ENCODE measurements at regions of chr5 and their contacts with region 1.

Region 1: DNA sequence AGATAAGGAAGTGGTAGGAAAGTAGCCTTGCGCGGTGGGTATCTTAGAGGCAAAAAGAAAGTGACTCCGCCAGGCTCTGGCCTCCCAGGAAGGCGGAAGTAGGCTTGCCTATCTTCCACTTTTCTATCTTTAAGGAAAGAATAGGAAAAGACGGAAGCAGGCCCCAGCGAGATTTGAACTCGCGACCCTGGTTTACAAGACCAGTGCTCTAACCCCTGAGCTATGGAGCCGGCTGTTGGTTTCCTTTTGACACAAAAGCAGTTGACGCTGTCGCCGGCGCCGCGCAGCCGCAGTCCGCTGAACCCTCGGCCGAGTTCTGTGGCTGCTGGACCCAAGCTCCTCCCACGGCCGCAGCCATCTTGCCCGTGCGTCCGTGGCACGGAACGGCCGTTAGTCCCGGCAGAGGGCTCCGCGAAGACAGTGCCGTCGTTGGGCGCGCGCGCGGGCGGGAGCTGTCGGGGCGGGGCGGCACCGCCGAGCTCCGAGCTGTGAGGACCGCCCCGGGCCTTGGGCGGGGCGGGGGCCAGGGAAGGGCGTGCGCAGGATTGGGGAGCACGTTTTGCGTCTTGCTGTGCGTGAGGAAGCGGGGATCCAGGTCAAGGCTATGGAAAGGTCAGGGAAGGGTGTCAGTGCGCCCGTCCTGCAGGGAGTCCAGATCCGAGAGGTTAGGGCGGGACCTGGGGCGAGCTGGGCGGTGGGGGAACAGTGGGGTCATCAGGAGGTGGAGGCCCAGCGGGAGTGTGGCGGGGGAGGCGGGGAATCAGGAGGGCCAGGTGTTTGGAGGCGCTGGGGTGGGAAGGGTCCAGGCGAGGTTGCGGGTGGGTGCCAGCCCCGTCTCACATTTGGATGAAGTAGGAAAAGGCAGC is 13.2 kb downstream of the TRIM7 start:
- DNase-seq: peak; percentile 87 to 100
- H3K4me3 ChIP-seq: peak overlapping the region; percentile 62 to 90 (median 78)
- H3K27ac ChIP-seq: no peak overlapping the region
- H3K4me1 ChIP-seq: peaks cover 0 to 11% (median 5%) of the 10 kb centered on the region in 4 experiments; a peak in 5 of 7 replicates
- H3K27me3 ChIP-seq: peaks cover 15 to 34% (median 23%) of the 10 kb centered on the region in 4 experiments; a peak in 6 of 7 replicates
- CTCF ChIP-seq: no peak
- EP300 ChIP-seq: no peak
- POLR2A ChIP-seq: no peak; a peak in 1 of 3 replicates
- RAD21 ChIP-seq: no peak

Region 2: GRCh38 chr5:181167814-181168488 is 23.8 kb before region 1 on chr5:
- CTCF ChIA-PET with region 1: interaction called, 26 read pairs
- POLR2A ChIA-PET with region 1: interaction called, 8 read pairs
- DNase-seq: peak; percentile 72 to 96
- H3K4me3 ChIP-seq: peak overlapping the region; percentile 47 to 73 (median 61); a peak in 7 of 8 replicates
- H3K27ac ChIP-seq: no peak overlapping the region
- H3K4me1 ChIP-seq: peaks cover 0 to 3% (median 0%) of the 10 kb centered on the region in 4 experiments; a peak in 3 of 7 replicates
- H3K27me3 ChIP-seq: peaks cover 6 to 34% (median 24%) of the 10 kb centered on the region in 4 experiments; a peak in 6 of 7 replicates
- CTCF ChIP-seq: peak; percentile 64 to 69 (median 68)
- EP300 ChIP-seq: no peak
- POLR2A ChIP-seq: no peak
- RAD21 ChIP-seq: peak; percentile 51 to 65

Region 3: DNA sequence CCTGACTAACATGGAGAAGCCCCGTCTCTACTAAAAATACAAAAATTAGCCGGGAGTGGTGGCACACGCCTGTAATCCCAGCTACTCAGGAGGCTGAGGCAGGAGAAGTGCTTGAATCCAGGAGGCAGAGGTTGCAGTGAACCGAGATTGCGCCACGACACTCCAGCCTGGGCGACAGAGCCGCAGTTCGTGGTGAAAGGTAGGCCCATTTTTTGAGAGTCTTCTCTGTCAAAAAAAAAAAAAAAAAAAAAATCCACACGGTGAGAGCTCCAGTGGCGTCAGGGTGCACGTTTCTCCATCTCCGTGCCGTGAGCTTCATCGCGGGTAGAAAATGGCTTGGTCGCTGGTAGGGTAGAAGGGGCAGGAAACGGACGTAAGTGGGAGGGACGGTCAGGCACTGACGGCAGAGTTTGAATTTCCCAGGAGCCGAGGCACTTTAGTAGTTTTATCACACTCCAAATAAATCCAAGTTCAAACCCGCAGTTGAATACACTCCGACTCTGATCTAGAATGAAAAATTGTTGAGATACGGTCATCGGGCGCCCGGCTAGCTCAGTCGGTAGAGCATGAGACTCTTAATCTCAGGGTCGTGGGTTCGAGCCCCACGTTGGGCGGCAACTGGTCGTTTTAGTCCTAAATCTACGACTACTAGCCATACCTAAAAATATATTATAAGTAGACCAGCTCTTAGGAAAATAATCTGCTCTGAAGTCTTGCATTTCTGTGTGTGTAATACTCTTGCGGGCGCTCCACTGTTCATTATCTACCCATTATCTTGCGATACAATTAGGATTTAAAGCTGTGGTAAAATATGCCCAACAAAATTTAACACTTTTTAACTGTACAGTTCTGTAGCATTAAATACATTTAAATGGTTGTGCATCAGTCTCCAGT is 15.7 kb after region 1 on chr5:
- CTCF ChIA-PET with region 1: interaction called, 197 read pairs
- POLR2A ChIA-PET with region 1: interaction called, 90 read pairs
- DNase-seq: peak in 1 of 2 experiments; percentile 97
- H3K4me3 ChIP-seq: peak overlapping the region; percentile 59 to 91 (median 86)
- H3K27ac ChIP-seq: no peak overlapping the region
- H3K4me1 ChIP-seq: peaks cover 0 to 13% (median 5%) of the 10 kb centered on the region in 4 experiments; a peak in 5 of 7 replicates
- H3K27me3 ChIP-seq: peaks cover 28 to 41% (median 39%) of the 10 kb centered on the region in 4 experiments
- CTCF ChIP-seq: no peak
- EP300 ChIP-seq: no peak
- POLR2A ChIP-seq: no peak
- RAD21 ChIP-seq: no peak

Measured in H1 (cell line).